Activated CD8-positive, alpha-beta T cell treated with anti-CD3 and anti-CD28 coated beads, Interleukin-2, amount 10 ng/mL, durations not matched to agents 7 days and 5 days (primary cell): ENCODE measurements at regions of chr1 and their contacts with region 1.

Region 1: GRCh38 chr1:224851210-224851847 is 78.1 kb upstream of the DNAH14 start:
- DNase-seq: peak; percentile 66
- ATAC-seq: peak; percentile 67
- H3K4me3 Mint-ChIP-seq: no peak overlapping the region
- H3K27ac Mint-ChIP-seq: no peak overlapping the region
- H3K4me1 Mint-ChIP-seq: no peaks in the 10 kb centered on the region
- H3K27me3 Mint-ChIP-seq: peaks cover 3% of the 10 kb centered on the region

Region 2: DNA sequence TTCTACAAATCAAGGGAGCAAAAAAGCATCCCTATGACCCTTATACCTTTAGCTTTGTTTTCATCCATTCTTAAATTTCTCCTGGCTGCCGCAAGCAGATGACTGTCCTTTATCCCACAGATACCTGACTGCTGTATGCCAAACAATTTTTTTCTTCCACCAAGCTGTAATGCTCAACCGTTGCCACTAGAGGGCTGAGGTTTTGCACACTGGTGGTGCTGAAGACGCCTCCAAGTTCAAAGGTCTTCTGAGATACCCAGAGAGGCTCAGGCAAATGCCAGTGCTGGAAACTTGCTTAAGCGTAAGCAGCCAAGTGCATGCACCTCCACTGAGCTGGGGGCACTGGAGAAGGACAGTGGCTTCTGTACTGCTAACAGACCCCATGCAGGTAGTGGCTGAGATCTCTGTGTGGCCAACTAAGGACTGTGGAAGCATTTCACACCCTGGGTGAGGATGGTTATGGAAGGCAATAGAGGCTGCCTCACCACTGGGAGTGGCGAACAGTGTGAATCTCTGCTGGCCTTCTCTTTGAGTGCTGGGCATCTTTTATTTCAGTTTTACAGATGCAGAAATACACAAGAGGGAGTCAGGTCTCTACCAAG is 206.7 kb before region 1 on chr1:
- CTCF ChIA-PET with region 1: interaction called, 14 read pairs
- POLR2A ChIA-PET with region 1: no interaction called
- DNase-seq: peak; percentile 72
- ATAC-seq: peak; percentile 79
- H3K4me3 Mint-ChIP-seq: no peak overlapping the region
- H3K27ac Mint-ChIP-seq: no peak overlapping the region
- H3K4me1 Mint-ChIP-seq: peaks cover 3% of the 10 kb centered on the region
- H3K27me3 Mint-ChIP-seq: peaks cover 11% of the 10 kb centered on the region

Region 3: GRCh38 chr1:224700915-224701531 is 150.3 kb before region 1 on chr1:
- CTCF ChIA-PET with region 1: interaction called, 30 read pairs
- POLR2A ChIA-PET with region 1: no interaction called
- DNase-seq: peak; percentile 25
- ATAC-seq: peak; percentile 44
- H3K4me3 Mint-ChIP-seq: no peak overlapping the region
- H3K27ac Mint-ChIP-seq: no peak overlapping the region
- H3K4me1 Mint-ChIP-seq: no peaks in the 10 kb centered on the region
- H3K27me3 Mint-ChIP-seq: peaks cover 2% of the 10 kb centered on the region

Region 4: GRCh38 chr1:224779536-224779935 is 71.8 kb before region 1 on chr1:
- CTCF ChIA-PET with region 1: no interaction called
- POLR2A ChIA-PET with region 1: no interaction called
- DNase-seq: no peak
- ATAC-seq: no peak
- H3K4me3 Mint-ChIP-seq: no peak overlapping the region
- H3K27ac Mint-ChIP-seq: no peak overlapping the region
- H3K4me1 Mint-ChIP-seq: peaks cover 22% of the 10 kb centered on the region
- H3K27me3 Mint-ChIP-seq: peaks cover 3% of the 10 kb centered on the region

Region 5: DNA sequence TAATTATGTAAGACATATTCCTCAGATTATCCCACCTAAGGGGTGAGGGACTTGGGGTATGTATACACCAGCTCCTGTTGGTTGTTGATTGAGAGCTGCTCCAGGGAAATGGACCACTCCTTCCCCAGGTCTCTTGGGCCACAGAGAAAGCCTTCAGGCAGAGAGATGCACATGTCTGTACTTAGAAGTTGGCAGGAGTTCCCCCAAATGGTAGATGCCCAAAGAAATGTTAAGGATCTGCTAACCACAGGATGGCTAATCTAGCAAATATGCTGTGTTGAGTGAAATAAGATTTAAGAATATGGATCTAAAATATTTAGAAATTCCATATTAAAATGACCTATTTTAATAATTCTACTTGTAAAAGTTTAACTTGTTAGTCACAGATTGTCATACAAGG is 22.6 kb before region 1 on chr1:
- CTCF ChIA-PET with region 1: interaction called, 10 read pairs
- POLR2A ChIA-PET with region 1: no interaction called
- DNase-seq: no peak
- ATAC-seq: no peak
- H3K4me3 Mint-ChIP-seq: no peak overlapping the region
- H3K27ac Mint-ChIP-seq: no peak overlapping the region
- H3K4me1 Mint-ChIP-seq: no peaks in the 10 kb centered on the region
- H3K27me3 Mint-ChIP-seq: peaks cover 22% of the 10 kb centered on the region

Region 6: DNA sequence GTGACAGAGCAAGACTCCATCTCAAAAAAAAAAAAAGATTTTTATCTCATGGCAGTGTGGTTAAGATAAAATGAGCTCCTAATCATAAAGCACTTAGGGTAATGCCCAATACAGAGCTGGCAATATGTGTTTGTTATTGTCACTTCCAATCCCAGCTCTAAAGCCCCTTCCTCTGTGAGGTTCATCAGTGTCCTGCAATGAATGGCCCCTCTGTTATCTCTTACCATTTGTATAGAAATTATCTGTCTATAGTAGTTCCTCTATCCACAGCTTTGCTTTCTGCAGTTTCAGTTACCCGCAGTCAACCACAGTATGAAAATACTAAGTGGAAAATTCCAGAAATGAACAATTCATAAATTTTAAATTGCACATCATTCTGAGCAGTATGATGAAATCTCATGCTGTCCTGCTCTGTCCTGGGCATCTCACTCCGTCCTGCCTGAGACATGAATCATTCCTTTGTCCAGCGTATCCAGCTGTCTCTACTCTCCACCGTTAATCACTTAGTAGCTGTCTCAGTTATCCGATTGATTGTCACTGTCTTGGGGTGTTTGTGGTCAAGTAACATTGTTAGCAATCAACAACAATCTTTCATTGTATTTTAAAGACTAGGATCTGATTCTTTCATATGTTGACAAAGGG is 28.0 kb after region 1 on chr1:
- CTCF ChIA-PET with region 1: no interaction called
- POLR2A ChIA-PET with region 1: no interaction called
- DNase-seq: no peak
- ATAC-seq: no peak
- H3K4me3 Mint-ChIP-seq: no peak overlapping the region
- H3K27ac Mint-ChIP-seq: no peak overlapping the region
- H3K4me1 Mint-ChIP-seq: no peaks in the 10 kb centered on the region
- H3K27me3 Mint-ChIP-seq: peaks cover 6% of the 10 kb centered on the region

Region 7: DNA sequence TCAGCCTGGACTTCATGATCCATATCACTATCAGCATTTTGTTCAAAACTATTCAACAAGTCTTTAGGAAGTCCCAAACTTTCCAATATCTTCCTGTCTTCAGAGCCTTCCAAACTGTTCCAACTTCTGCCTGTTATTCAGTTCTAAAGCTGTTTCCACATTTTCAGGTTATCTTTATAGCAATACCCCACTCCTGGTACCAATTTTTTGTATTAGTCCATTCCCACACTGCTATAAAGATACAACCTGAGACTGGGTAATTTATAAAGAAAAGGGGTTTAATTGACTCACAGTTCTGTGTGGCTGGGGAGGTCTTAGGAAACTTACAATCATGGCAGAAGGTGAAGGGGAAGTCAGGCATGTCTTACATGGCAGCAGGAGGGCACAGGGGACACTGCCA is 59.9 kb after region 1 on chr1:
- CTCF ChIA-PET with region 1: no interaction called
- POLR2A ChIA-PET with region 1: no interaction called
- DNase-seq: no peak
- ATAC-seq: no peak
- H3K4me3 Mint-ChIP-seq: no peak overlapping the region
- H3K27ac Mint-ChIP-seq: no peak overlapping the region
- H3K4me1 Mint-ChIP-seq: no peaks in the 10 kb centered on the region
- H3K27me3 Mint-ChIP-seq: peaks cover 2% of the 10 kb centered on the region

Region 8: GRCh38 chr1:224922404-224923164 is 71.3 kb after region 1 on chr1:
- CTCF ChIA-PET with region 1: interaction called, 14 read pairs
- POLR2A ChIA-PET with region 1: no interaction called
- DNase-seq: no peak
- ATAC-seq: peak; percentile 60
- H3K4me3 Mint-ChIP-seq: no peak overlapping the region
- H3K27ac Mint-ChIP-seq: no peak overlapping the region
- H3K4me1 Mint-ChIP-seq: peaks cover 1% of the 10 kb centered on the region
- H3K27me3 Mint-ChIP-seq: peaks cover 10% of the 10 kb centered on the region

Region 9: GRCh38 chr1:225004396-225004795 is 153.1 kb after region 1 on chr1:
- CTCF ChIA-PET with region 1: no interaction called
- POLR2A ChIA-PET with region 1: no interaction called
- DNase-seq: no peak
- ATAC-seq: no peak
- H3K4me3 Mint-ChIP-seq: no peak overlapping the region
- H3K27ac Mint-ChIP-seq: no peak overlapping the region
- H3K4me1 Mint-ChIP-seq: no peaks in the 10 kb centered on the region
- H3K27me3 Mint-ChIP-seq: no peaks in the 10 kb centered on the region